Colonic mucosa (tissue), 4 donors: ENCODE measurements at regions of chr3 and their contacts with region 1.

Region 1: DNA sequence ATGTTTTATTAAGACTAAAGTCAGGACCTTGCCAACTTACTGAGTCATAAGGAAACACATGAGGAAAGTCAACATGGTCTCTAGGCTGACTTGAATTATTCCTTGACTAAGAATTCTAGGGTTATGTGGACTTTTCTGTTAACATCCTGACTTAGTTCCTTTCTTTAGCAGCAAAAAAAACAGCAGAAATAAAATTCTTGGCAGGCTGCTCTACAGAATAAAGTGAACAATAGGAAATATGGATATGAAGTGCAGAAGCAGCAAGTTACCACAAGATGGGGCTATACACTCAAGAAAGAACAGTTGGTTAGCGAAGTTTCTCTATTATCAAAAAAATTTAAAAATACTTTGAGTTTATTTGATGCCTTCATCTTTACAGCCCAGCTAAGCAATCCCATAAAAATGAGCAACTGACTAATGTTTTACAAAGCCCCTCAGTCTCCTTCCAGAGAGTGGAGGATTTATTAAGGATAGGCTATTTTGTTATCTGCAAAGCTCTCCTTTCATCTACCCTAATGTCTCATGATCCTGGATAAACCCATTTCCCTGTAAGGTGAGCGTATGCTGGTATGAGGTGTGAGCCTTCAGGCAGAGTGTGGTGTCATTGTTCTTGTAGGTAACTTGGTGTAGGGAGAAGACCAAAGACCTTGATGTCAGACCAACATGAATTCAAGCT is 23.1 kb upstream of the MCCC1 start:
- DNase-seq: no peak
- H3K4me3 ChIP-seq: no peak overlapping the region
- H3K27ac ChIP-seq: no peak overlapping the region
- H3K4me1 ChIP-seq: no peaks in the 10 kb centered on the region
- H3K27me3 ChIP-seq: peaks cover under 1% of the 10 kb centered on the region
- CTCF ChIP-seq: peak; percentile 85

Region 2: GRCh38 chr3:183385698-183386613 is 263.6 kb after region 1 on chr3:
- intact Hi-C with region 1: loop called (anchors 2 kb)
- DNase-seq: peak; percentile 74
- H3K4me3 ChIP-seq: no peak overlapping the region
- H3K27ac ChIP-seq: no peak overlapping the region
- H3K4me1 ChIP-seq: no peaks in the 10 kb centered on the region
- H3K27me3 ChIP-seq: no peaks in the 10 kb centered on the region
- CTCF ChIP-seq: peak; percentile 56